ENCODE measurements at regions of chr1 and their contacts with region 1.

Region 1: DNA sequence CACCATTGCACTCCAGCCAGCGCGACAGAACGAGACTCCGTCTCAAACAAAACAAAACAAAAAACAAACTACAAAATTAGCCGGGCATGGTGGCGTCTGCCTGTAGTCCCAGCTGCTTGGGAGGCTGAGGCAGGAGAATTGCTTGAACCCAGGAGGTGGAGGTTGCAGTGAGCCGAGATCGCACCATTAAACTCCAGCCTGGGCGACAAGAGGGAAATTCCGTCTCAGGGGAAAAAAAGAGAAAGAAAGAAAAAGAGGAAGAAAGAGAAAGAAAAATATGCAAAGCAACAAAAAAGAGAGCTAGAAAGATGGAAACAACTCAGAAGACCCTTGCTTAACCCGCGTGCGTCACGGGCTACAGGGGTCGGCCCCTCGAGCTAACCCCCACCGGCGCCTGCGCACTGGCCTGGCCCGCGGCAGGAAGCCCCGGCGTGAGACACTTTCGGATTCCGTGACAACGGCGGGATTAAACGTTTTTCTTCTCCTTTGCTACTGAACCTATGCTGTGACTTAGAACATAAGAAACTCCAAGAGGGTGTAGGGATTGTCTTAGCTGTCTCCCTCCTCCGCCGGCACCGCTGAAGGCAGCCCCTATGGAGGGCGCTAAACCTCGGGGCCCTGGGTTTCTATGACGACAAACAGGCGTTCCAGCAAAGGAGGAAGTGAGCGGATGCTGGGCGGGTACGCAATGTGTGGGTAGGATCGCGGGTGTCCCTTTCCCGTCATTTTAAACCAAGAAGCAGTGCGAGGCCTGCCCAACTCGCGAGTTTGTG is at the start of gene AXDND1:
- DNase-seq: peak; percentile 70
- ATAC-seq: peak; percentile 96
- H3K4me3 ChIP-seq: peak within 1 kb of the TSS; percentile 79
- H3K27ac ChIP-seq: peak within 1 kb of the TSS; percentile 97
- H3K4me1 ChIP-seq: no peaks in the 10 kb centered on the region; the same call in 1 of the 2 replicates
- H3K27me3 ChIP-seq: 0 out of 4 replicates have a peak, but pooled peaks cover 0 to 2% of the 10 kb centered on the region in 2 experiments
- CTCF ChIP-seq: peak in 1 of 3 experiments; percentile 6; a peak in 1 of 6 replicates
- EP300 ChIP-seq: no peak
- POLR2A ChIP-seq: peak; percentile 67
- RAD21 ChIP-seq: no peak
- polyA plus RNA-seq, gene AXDND1: 0.16 to 0.27 TPM

Region 2: DNA sequence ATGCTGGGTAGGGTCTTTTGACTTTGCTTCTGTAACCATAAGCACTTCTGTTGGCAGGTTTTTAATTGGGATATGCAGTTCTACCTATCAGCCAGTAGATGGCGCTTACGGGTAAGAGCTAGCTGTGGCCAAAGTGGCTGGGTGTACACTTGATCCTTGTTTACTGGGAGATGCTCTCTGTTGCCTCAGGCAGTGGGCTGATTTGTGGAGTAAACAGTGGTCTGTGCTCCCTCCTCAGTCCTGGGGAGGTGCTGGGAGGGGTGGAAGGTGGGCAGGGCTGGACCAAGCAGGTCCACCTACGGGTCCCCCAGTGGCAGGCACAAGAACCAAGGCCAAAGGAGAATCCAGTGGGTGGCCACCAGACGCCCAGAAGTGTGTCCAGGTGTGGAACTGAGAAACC is 597.1 kb before region 1 on chr1:
- CTCF ChIA-PET with region 1: no interaction called
- POLR2A ChIA-PET with region 1: no interaction called
- RAD21 ChIA-PET with region 1: no interaction called
- SMC1A ChIA-PET with region 1: no interaction called
- in situ Hi-C with region 1: loop called (anchors 25 kb)
- intact Hi-C with region 1: loop called (anchors 5 kb)
- DNase-seq: no peak
- ATAC-seq: peak; percentile 75
- H3K4me3 ChIP-seq: no peak overlapping the region
- H3K27ac ChIP-seq: no peak overlapping the region
- H3K4me1 ChIP-seq: no peaks in the 10 kb centered on the region
- H3K27me3 ChIP-seq: no peaks in the 10 kb centered on the region
- CTCF ChIP-seq: peak; percentile 75 to 81 (median 77)
- EP300 ChIP-seq: no peak
- POLR2A ChIP-seq: no peak
- RAD21 ChIP-seq: peak; percentile 64

Region 3: DNA sequence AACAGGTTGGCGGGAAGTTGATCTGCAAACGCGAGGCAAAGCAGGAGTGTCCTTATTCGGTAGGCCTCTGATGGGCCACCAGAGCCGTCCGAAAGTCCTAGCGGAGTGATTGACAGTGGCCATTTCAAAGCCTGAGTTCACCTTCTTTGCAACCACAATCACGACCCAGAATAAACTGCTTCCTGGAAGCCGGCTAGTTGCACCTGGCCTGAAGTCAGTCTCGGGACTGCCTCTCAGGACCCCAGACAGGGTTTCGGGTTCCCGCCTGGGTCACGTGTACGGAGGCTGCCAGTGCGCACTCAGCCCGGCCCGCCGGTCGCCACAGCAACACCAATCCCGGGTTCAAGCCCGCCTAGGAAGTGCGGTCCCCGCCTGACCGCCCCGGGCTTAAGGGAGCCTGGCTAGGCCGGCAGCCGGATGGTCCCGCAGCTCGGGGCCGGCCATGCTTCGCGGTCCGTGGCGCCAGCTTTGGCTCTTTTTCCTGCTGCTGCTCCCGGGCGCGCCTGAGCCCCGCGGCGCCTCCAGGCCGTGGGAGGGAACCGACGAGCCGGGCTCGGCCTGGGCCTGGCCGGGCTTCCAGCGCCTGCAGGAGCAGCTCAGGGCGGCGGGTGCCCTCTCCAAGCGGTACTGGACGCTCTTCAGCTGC is 283.7 kb before region 1 on chr1 and contains the start of gene TOR3A:
- CTCF ChIA-PET with region 1: interaction called, 80 read pairs
- POLR2A ChIA-PET with region 1: interaction called, 5 read pairs
- RAD21 ChIA-PET with region 1: interaction called, 61 read pairs
- SMC1A ChIA-PET with region 1: interaction called, 33 read pairs
- in situ Hi-C with region 1: loop called (anchors 5 kb)
- intact Hi-C with region 1: loop called (anchors 1 kb)
- DNase-seq: peak; percentile 81
- ATAC-seq: peak; percentile 90
- H3K4me3 ChIP-seq: peak within 1 kb of the TSS; percentile 95
- H3K27ac ChIP-seq: peak within 1 kb of the TSS; percentile 96
- H3K4me1 ChIP-seq: peaks cover 16% of the 10 kb centered on the region
- H3K27me3 ChIP-seq: no peaks in the 10 kb centered on the region
- CTCF ChIP-seq: no peak
- EP300 ChIP-seq: peak in 1 of 2 experiments; percentile 52; a peak in 1 of 4 replicates
- POLR2A ChIP-seq: peak; percentile 98
- RAD21 ChIP-seq: no peak
- polyA plus RNA-seq, gene TOR3A: 8.6 to 14.5 TPM

Region 4: GRCh38 chr1:179121159-179121938 is 244.2 kb before region 1 on chr1:
- CTCF ChIA-PET with region 1: interaction called, 87 read pairs
- POLR2A ChIA-PET with region 1: no interaction called
- RAD21 ChIA-PET with region 1: interaction called, 19 read pairs
- SMC1A ChIA-PET with region 1: interaction called, 49 read pairs
- in situ Hi-C with region 1: loop called (anchors 5 kb)
- intact Hi-C with region 1: loop called (anchors 1 kb)
- DNase-seq: no peak
- ATAC-seq: peak; percentile 67
- H3K4me3 ChIP-seq: no peak overlapping the region
- H3K27ac ChIP-seq: no peak overlapping the region
- H3K4me1 ChIP-seq: no peaks in the 10 kb centered on the region
- H3K27me3 ChIP-seq: no peaks in the 10 kb centered on the region
- CTCF ChIP-seq: peak; percentile 58 to 62 (median 61)
- EP300 ChIP-seq: no peak
- POLR2A ChIP-seq: no peak
- RAD21 ChIP-seq: peak; percentile 79

Region 5: DNA sequence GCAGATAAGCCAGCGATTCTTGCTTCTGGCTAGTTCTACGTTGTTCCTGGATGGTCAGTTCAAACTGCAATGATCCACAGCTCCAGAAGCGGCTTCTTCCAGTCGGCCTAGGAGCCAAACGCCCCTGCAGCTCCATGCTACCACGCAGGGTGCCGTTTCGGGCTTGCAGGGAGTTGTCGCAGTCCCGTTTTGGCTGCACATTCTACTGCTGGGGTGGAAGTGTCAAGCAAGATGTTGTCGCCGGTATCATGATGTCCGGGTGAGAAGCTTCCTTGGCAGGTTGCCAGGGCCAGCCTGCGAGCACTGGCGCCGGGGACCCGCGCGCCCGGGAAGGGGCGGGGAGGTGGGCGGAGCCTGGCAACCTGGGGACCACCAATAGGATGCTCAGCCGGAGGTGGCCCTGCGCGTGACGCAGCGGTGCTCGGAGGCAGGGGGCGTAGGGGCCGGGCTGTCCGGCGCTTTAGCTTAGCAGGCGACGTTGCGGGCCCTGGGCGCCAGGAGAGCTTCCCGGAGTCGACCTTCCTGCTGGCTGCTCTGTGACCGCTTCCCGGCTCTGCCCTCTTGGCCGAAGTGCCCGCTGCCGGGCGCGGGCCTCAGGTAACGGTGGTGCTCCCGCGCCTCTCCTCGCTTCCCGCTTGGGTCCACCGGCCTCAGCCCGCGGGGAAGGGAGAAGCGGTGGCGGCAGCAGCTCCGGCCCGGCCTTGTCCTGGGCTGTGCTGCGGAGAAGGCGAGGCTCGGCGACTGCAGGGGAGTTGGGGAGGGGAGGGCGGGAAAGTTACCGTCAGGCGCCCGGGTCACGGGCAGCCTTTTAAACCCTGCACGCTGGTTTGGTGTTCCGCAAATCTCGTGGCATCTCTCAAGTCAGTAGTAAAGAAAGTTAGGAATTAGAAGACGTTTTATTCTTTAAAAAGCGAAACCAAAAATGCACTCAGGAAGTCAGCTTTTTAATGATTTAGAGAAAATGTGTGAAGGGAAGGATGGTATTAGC is 71.9 kb before region 1 on chr1 and contains the start of gene SOAT1:
- CTCF ChIA-PET with region 1: interaction called, 28 read pairs
- POLR2A ChIA-PET with region 1: interaction called, 8 read pairs
- RAD21 ChIA-PET with region 1: interaction called, 18 read pairs
- SMC1A ChIA-PET with region 1: interaction called, 18 read pairs
- in situ Hi-C with region 1: no loop called
- intact Hi-C with region 1: loop called (anchors 1 kb)
- DNase-seq: peak; percentile 63
- ATAC-seq: peak; percentile 94
- H3K4me3 ChIP-seq: peak within 1 kb of the TSS; percentile 100
- H3K27ac ChIP-seq: peak within 1 kb of the TSS; percentile 78
- H3K4me1 ChIP-seq: no peaks in the 10 kb centered on the region
- H3K27me3 ChIP-seq: no peaks in the 10 kb centered on the region
- CTCF ChIP-seq: 0 out of 6 replicates have a peak, but pooled peaks of 1 of the 3 experiments have one; percentile 14
- EP300 ChIP-seq: no peak
- POLR2A ChIP-seq: peak; percentile 89
- RAD21 ChIP-seq: no peak
- polyA plus RNA-seq, gene SOAT1: 8.6 to 12.5 TPM

Region 6: DNA sequence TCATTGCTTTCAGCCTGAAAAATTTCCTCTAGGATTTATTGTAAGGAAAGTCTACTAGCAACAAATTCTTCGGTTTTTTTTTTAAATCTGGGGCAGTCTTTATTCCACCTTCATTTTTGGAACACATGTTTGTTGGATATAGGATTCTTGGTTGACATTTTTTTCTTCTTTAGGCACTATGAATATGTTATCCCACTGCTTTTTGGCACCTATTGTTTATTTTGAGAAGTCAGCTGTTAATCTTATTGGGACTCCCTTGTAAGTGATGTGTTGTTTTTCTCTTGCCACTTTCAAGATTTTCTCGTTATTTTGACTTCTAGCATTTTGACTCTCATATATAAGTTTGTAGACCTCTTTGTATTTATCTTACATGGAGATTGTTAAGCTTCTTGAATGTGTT is 111.0 kb after region 1 on chr1:
- CTCF ChIA-PET with region 1: no interaction called
- POLR2A ChIA-PET with region 1: no interaction called
- RAD21 ChIA-PET with region 1: no interaction called
- SMC1A ChIA-PET with region 1: no interaction called
- in situ Hi-C with region 1: no loop called
- intact Hi-C with region 1: no loop called
- DNase-seq: no peak
- ATAC-seq: no peak
- H3K4me3 ChIP-seq: no peak overlapping the region
- H3K27ac ChIP-seq: no peak overlapping the region
- H3K4me1 ChIP-seq: no peaks in the 10 kb centered on the region
- H3K27me3 ChIP-seq: no peaks in the 10 kb centered on the region
- CTCF ChIP-seq: no peak
- EP300 ChIP-seq: no peak
- POLR2A ChIP-seq: no peak
- RAD21 ChIP-seq: no peak